Transverse colon (tissue), 4 donors: ENCODE measurements at regions of chr9 and their contacts with region 1.

Region 1: GRCh38 chr9:28073270-28073669 is 500.0 kb upstream of the C9orf72 start:
- DNase-seq: no peak
- H3K4me3 ChIP-seq: no peak overlapping the region
- H3K27ac ChIP-seq: no peak overlapping the region
- H3K4me1 ChIP-seq: no peaks in the 10 kb centered on the region
- H3K27me3 ChIP-seq: no peaks in the 10 kb centered on the region
- CTCF ChIP-seq: peak; percentile 14 to 42 (median 35)
- EP300 ChIP-seq: no peak
- POLR2A ChIP-seq: no peak

Region 2: DNA sequence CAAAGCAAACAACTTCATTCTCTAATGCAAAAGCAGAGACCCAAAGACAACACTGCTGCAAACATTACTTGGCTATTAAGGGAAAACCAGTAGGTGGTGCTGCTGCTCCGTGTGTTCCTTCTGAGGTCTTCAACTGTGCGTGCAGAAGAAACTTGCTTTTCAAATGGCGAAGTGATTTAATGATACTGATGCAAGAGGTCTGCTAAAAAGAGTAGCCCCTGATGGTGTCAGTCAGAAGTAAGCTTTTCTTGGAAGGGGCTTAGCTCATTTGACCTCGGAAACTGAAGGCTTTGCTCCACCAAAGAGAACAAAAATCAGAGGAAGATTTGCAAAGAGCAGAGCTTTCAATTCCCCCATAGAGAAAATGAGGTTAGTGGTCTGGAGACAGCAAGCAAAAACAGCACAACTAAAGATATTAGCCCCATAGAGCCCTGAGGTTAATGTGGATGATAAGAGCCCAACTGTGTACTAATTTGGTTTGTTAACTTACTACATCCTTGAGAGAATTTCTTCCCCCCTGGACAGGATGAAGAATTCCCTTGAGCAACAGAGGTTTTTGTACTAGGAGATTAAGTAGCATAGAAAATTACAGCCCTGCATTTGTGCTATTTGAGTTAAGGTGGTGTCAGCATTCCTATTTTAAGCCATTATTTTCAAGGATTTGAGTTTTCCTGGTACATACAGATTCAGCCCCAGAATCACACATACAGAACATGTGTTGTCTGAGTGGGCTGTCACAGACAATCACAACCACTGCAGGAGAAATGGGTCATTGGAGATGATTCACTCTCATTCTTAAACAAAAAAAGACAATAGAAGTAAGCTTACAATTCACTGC is 346.8 kb before region 1 on chr9:
- in situ Hi-C with region 1: loop called in 2 of 4 experiments (anchors 10 to 25 kb)
- intact Hi-C with region 1: no loop called
- DNase-seq: peak; percentile 59
- H3K4me3 ChIP-seq: no peak overlapping the region
- H3K27ac ChIP-seq: no peak overlapping the region
- H3K4me1 ChIP-seq: peaks cover 0 to 5% (median 0%) of the 10 kb centered on the region in 4 donors
- H3K27me3 ChIP-seq: no peaks in the 10 kb centered on the region
- CTCF ChIP-seq: peak; percentile 62 to 70 (median 67)
- EP300 ChIP-seq: no peak
- POLR2A ChIP-seq: no peak

Region 3: DNA sequence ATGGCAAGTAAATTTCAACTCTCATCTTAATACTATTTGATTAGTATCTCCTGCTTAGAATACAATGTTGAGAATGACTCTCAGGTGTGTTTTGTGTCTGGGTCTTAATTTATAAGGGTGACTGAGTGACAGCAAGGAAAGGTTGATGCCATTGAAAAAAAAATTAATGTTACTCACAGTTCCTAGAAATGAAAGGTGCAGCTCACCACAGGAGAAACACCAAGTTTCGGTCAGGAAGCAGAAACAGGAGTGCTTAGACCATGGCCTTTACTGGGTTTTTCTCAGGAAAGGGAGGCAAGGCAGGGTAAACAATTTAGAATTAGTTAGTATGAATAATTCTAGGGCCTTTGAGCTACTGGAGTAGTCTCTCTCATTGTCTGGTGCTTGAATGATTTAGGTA is 340.8 kb before region 1 on chr9:
- in situ Hi-C with region 1: loop called in 2 of 4 experiments (anchors 10 to 25 kb)
- intact Hi-C with region 1: no loop called
- DNase-seq: no peak
- H3K4me3 ChIP-seq: no peak overlapping the region
- H3K27ac ChIP-seq: no peak overlapping the region
- H3K4me1 ChIP-seq: no peaks in the 10 kb centered on the region
- H3K27me3 ChIP-seq: no peaks in the 10 kb centered on the region
- CTCF ChIP-seq: no peak
- EP300 ChIP-seq: no peak
- POLR2A ChIP-seq: no peak